ENCODE measurements at regions of chr3 and their contacts with region 1.

Region 1: DNA sequence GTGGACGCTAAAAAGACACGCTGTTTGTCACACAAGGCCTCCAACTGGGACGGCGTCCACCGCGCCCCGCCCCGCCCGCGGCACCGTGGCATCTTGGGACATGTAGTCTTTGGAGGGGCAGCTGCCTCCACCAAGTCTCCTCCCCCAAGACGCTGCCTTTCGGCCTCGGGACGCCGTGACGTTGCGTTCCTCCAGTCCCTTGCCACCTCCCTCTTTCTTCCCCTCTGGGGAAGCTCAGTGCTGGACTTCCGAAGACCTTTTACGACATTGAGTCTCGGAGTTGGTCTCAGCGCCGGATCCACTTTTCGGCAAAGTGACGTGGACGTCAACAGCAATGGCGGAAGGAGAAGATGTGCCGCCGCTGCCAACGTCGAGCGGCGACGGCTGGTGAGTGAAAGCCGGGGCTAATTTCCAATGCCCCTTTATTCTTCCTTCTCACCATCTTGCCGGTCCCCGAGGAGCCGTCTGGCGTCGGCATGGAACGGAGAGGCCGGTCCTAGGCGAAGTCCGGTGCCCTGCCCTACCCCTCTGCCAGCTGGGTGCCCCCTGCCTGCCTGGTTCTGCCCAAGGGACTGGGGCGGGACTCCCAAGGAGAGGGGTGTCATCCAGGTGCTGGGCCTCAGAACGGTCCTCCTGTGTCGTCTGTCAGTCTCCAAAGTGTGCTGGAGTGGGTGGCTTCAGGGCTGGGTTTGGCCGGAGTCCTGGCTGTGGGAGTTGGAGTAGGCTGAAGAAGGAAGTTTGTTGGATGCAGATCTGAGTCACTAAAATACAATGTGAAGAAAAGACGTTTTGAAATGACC is at the start of gene TBC1D23:
- DNase-seq: peak; percentile 100
- H3K4me3 ChIP-seq: peak within 1 kb of the TSS; percentile 81 to 100 (median 99)
- H3K27ac ChIP-seq: peak within 1 kb of the TSS; percentile 96 to 99 (median 96)
- H3K4me1 ChIP-seq: peaks cover 0 to 45% (median 42%) of the 10 kb centered on the region in 4 donors
- H3K27me3 ChIP-seq: no peaks in the 10 kb centered on the region
- CTCF ChIP-seq: no peak
- EP300 ChIP-seq: peak in 1 of 4 donors; percentile 82
- POLR2A ChIP-seq: peak; percentile 80 to 84
- total RNA-seq, gene TBC1D23: 31.3 to 34.9 (median 32.7) TPM

Region 2: GRCh38 chr3:99817437-99818240 is 443.2 kb before region 1 on chr3 and contains the start of gene CMSS1:
- intact Hi-C with region 1: loop called (anchors 5 kb)
- DNase-seq: peak; percentile 97
- H3K4me3 ChIP-seq: peak within 1 kb of the TSS; percentile 55 to 78 (median 64)
- H3K27ac ChIP-seq: peak within 1 kb of the TSS; percentile 83 to 94 (median 91)
- H3K4me1 ChIP-seq: peaks cover 0 to 22% (median 17%) of the 10 kb centered on the region in 4 donors
- H3K27me3 ChIP-seq: no peaks in the 10 kb centered on the region
- CTCF ChIP-seq: peak in 2 of 4 experiments; percentile 25 to 51
- EP300 ChIP-seq: peak in 1 of 4 donors; percentile 43
- POLR2A ChIP-seq: peak; percentile 35 to 42
- total RNA-seq, gene CMSS1: 11.1 to 19.4 (median 16.6) TPM